HepG2 (cell line): ENCODE measurements at regions of chr2 and their contacts with region 1.

Region 1: GRCh38 chr2:212646702-212647366 is 108.2 kb upstream of the ERBB4 start:
- DNase-seq: no peak
- ATAC-seq: no peak
- H3K4me3 ChIP-seq: no peak overlapping the region
- H3K27ac ChIP-seq: no peak overlapping the region
- H3K4me1 ChIP-seq: no peaks in the 10 kb centered on the region
- H3K27me3 ChIP-seq: no peaks in the 10 kb centered on the region
- CTCF ChIP-seq: no peak
- EP300 ChIP-seq: no peak
- POLR2A ChIP-seq: no peak
- RAD21 ChIP-seq: no peak

Region 2: DNA sequence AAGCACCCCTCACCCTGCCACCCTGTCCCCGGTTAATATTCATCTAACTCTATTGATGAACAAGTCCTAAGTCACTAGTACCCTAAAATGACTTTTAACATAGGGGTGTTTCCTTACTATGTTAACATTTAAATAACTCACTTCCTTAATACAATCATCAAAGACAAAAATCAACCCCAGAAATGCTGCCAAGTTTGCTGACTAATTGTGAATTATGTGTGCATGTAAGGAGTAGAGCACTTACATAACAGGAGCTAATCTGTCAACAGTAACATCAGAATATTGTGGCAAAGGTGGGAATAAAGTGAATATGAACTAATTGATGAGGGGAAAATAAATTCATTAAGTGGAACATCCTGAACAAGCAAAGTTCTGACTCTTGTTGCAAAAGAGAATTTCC is 26.9 kb before region 1 on chr2:
- CTCF ChIA-PET with region 1: no interaction called
- POLR2A ChIA-PET with region 1: no interaction called
- in situ Hi-C with region 1: no loop called
- intact Hi-C with region 1: loop called (anchors 2 kb)
- DNase-seq: no peak
- ATAC-seq: no peak
- H3K4me3 ChIP-seq: no peak overlapping the region
- H3K27ac ChIP-seq: no peak overlapping the region
- H3K4me1 ChIP-seq: no peaks in the 10 kb centered on the region
- H3K27me3 ChIP-seq: no peaks in the 10 kb centered on the region
- CTCF ChIP-seq: no peak
- EP300 ChIP-seq: no peak
- POLR2A ChIP-seq: no peak
- RAD21 ChIP-seq: no peak